ENCODE measurements at regions of chr1 and their contacts with region 1.

Region 1: DNA sequence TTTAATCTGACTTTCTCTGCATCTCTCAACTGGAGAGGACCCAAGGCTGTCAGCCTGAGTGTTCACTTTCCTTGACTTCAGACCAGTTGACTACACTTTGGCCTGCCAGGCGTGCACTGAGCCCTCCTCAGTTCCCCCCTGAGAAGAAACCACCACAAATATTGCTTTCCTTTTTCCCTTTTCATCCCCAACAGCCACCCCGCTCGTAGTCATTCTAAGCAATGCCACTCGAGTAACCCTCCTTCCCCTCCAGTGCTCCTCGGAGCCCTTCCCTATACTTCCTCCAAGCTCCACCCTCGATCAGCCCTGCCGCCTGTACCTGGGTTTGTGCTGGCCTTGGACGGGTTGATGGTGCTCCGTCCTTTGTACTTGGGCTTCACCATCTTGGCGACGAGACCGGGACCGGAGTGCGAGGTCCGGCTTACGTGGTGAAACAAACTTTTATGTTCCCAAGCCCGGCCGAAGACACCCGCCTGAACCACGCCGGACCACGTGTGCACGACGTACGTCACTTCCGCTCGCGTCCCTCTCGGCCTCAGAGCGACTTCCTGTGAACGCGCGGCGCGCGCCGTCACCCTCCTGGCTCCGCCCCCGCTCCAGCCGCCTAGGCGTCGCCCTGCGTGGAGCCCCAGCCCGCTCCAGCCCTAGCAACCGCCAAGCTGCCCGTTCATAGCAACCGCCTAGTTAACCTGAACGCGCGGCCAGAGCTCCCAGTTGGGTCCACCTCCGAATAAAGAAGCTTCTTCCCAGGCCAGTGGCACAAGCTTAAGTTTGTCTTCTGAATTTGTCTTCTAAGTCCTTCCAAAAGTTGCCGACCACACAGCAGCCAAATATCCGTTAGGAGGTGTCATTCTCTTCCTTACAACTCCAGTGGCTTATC is at the start of gene GNL2:
- DNase-seq: peak; percentile 88 to 99 (median 96)
- ATAC-seq: peak; percentile 93
- H3K4me3 ChIP-seq: peak within 1 kb of the TSS; percentile 93
- H3K4me3 Mint-ChIP-seq: peak within 1 kb of the TSS; percentile 97
- H3K27ac ChIP-seq: peak within 1 kb of the TSS; percentile 75 to 90
- H3K27ac Mint-ChIP-seq: peak within 1 kb of the TSS; percentile 93
- H3K4me1 ChIP-seq: peaks cover 22% of the 10 kb centered on the region
- H3K4me1 Mint-ChIP-seq: peaks cover 34% of the 10 kb centered on the region
- H3K27me3 ChIP-seq: no peaks in the 10 kb centered on the region
- H3K27me3 Mint-ChIP-seq: no peaks in the 10 kb centered on the region
- CTCF ChIP-seq: no peak
- total RNA-seq, gene GNL2: 43.4 to 44.5 TPM

Region 2: GRCh38 chr1:36664571-36665287 is 931.0 kb before region 1 on chr1:
- CTCF ChIA-PET with region 1: no interaction called
- POLR2A ChIA-PET with region 1: no interaction called
- intact Hi-C with region 1: no loop called
- DNase-seq: no peak
- ATAC-seq: no peak
- H3K4me3 ChIP-seq: no peak overlapping the region
- H3K4me3 Mint-ChIP-seq: no peak overlapping the region
- H3K27ac ChIP-seq: no peak overlapping the region
- H3K27ac Mint-ChIP-seq: no peak overlapping the region
- H3K4me1 ChIP-seq: no peaks in the 10 kb centered on the region
- H3K4me1 Mint-ChIP-seq: no peaks in the 10 kb centered on the region
- H3K27me3 ChIP-seq: peaks cover 0 to 6% of the 10 kb centered on the region in 2 experiments
- H3K27me3 Mint-ChIP-seq: peaks cover 27% of the 10 kb centered on the region
- CTCF ChIP-seq: no peak

Region 3: DNA sequence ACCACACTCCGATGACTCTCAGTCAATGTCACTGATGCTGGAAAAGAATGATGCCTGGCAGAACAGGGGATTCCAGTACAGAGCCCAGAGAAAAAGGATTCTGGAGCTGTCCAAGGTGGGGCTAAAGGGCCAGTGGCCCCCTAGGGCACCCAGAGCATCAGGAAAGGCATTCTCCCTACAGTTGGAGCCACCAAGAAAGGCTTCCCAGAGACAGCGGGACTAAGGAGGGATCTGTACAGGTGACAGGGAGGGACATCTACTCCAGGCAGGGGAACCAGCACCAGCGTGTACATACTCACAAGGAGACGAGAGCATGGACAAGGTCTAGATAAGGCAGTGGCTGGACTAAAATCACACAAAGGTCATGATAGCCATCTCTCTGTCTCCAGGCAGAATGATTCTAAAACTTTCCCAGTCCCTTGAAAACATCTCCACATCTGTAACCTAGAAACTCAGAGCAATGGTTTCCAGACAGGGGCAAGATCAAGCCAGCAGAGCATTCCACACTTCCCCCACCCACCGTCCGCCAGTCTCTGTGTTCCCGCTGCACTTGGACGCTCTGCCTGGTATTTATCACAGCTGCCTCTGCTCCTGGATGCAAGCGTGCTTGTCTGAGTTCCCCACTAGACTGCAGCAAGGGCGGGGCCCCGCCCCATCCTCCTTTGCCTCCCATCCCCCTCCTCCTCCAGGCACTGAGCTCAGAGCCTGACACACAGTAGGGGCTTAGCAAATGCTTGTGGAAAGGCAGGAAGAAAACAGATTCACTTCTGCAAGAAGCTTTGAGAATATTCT is 232.9 kb before region 1 on chr1:
- CTCF ChIA-PET with region 1: no interaction called
- POLR2A ChIA-PET with region 1: no interaction called
- intact Hi-C with region 1: no loop called
- DNase-seq: no peak
- ATAC-seq: no peak
- H3K4me3 ChIP-seq: no peak overlapping the region
- H3K4me3 Mint-ChIP-seq: no peak overlapping the region
- H3K27ac ChIP-seq: no peak overlapping the region
- H3K27ac Mint-ChIP-seq: no peak overlapping the region
- H3K4me1 ChIP-seq: no peaks in the 10 kb centered on the region
- H3K4me1 Mint-ChIP-seq: no peaks in the 10 kb centered on the region
- H3K27me3 ChIP-seq: peaks cover 25 to 26% of the 10 kb centered on the region in 2 experiments
- H3K27me3 Mint-ChIP-seq: peaks cover 72% of the 10 kb centered on the region
- CTCF ChIP-seq: no peak

Region 4: GRCh38 chr1:37474046-37474759 is 121.5 kb before region 1 on chr1 and contains the start of gene ZC3H12A:
- CTCF ChIA-PET with region 1: no interaction called
- POLR2A ChIA-PET with region 1: no interaction called
- intact Hi-C with region 1: loop called in 1 of 2 experiments (anchors 1 kb)
- DNase-seq: peak; percentile 83 to 98 (median 93)
- ATAC-seq: peak; percentile 61
- H3K4me3 ChIP-seq: peak within 1 kb of the TSS; percentile 92
- H3K4me3 Mint-ChIP-seq: peak within 1 kb of the TSS; percentile 97
- H3K27ac ChIP-seq: peak within 1 kb of the TSS; percentile 95 to 97
- H3K27ac Mint-ChIP-seq: peak within 1 kb of the TSS; percentile 100
- H3K4me1 ChIP-seq: peaks cover 69% of the 10 kb centered on the region
- H3K4me1 Mint-ChIP-seq: peaks cover 66% of the 10 kb centered on the region
- H3K27me3 ChIP-seq: no peaks in the 10 kb centered on the region
- H3K27me3 Mint-ChIP-seq: no peaks in the 10 kb centered on the region
- CTCF ChIP-seq: no peak
- total RNA-seq, gene ZC3H12A: 164 to 165 TPM

Region 5: GRCh38 chr1:37859507-37860345 is 264.0 kb after region 1 on chr1 and contains the start of gene MTF1:
- CTCF ChIA-PET with region 1: no interaction called
- POLR2A ChIA-PET with region 1: no interaction called
- intact Hi-C with region 1: loop called (anchors 5 kb)
- DNase-seq: peak; percentile 91 to 99 (median 95)
- ATAC-seq: peak; percentile 98
- H3K4me3 ChIP-seq: peak within 1 kb of the TSS; percentile 88
- H3K4me3 Mint-ChIP-seq: peak within 1 kb of the TSS; percentile 98
- H3K27ac ChIP-seq: peak within 1 kb of the TSS; percentile 81 to 91
- H3K27ac Mint-ChIP-seq: peak within 1 kb of the TSS; percentile 87
- H3K4me1 ChIP-seq: peaks cover 18% of the 10 kb centered on the region
- H3K4me1 Mint-ChIP-seq: peaks cover 41% of the 10 kb centered on the region
- H3K27me3 ChIP-seq: no peaks in the 10 kb centered on the region
- H3K27me3 Mint-ChIP-seq: no peaks in the 10 kb centered on the region
- CTCF ChIP-seq: peak; percentile 91
- total RNA-seq, gene MTF1: 28.1 to 31.2 TPM